Heart right ventricle (tissue), 16 donors: ENCODE measurements at regions of chr13 and their contacts with region 1.

Region 1: DNA sequence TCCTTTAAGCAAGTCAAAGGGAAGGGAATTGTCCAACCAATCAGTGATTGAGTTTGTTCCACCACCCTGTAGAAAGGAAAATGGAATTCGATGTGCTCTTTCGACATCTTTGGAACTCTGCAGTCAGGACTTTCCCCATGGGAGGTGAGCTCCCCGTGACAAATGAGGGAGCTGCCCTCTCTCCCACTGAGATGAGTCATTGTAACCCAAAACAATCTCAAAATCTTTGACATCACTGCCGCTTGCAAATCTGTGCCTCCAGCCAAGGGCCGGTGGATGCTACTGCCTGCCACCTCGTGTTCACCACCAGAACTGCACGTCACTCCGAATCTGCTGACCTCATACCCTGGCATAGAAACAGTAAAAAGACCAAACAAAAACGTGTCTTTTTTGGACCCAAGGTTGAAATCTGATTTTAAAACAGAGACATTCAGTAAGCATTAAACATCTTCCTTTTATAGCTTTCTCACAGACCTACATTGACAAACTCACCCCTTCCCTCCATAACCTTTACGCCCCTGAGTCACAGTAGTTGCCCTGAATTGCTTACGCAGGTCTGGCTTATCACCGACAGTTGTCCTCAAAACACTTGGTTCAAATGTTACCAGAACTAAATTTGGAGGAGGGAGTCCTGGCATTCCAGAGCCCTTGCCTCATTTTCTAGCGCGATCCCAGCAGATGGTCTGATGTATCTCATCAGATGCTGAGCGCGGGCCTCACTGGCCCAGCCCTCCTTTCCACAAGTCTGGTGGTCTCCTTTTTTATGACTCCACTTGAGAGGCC is 105.2 kb downstream of the COL4A2 start:
- DNase-seq: peak; percentile 84 to 93
- ATAC-seq: peak; percentile 81 to 89 (median 84)
- H3K4me3 ChIP-seq: peak overlapping the region in 1 of 10 donors; percentile 1
- H3K27ac ChIP-seq: peak overlapping the region; percentile 54 to 93 (median 85)
- H3K4me1 ChIP-seq: peaks cover 56 to 97% (median 86%) of the 10 kb centered on the region in 9 donors
- H3K27me3 ChIP-seq: no peaks in the 10 kb centered on the region
- CTCF ChIP-seq: peak; percentile 88 to 98 (median 93)

Region 2: GRCh38 chr13:110225609-110226562 is 186.4 kb before region 1 on chr13:
- intact Hi-C with region 1: loop called in 9 of 10 experiments (anchors 1 to 10 kb)
- DNase-seq: no peak
- ATAC-seq: no peak
- H3K4me3 ChIP-seq: no peak overlapping the region
- H3K27ac ChIP-seq: peak overlapping the region in 9 of 10 donors; percentile 15 to 76 (median 52)
- H3K4me1 ChIP-seq: peaks cover 5 to 90% (median 63%) of the 10 kb centered on the region in 9 donors
- H3K27me3 ChIP-seq: no peaks in the 10 kb centered on the region
- CTCF ChIP-seq: no peak

Region 3: GRCh38 chr13:110306960-110307746 is 105.2 kb before region 1 on chr13 and contains the starts of genes COL4A1 and COL4A2:
- intact Hi-C with region 1: loop called in 9 of 10 experiments (anchors 1 to 10 kb)
- DNase-seq: peak; percentile 81 to 86
- ATAC-seq: peak; percentile 69 to 88 (median 82)
- H3K4me3 ChIP-seq: peak within 1 kb of the TSS; percentile 81 to 98 (median 96)
- H3K27ac ChIP-seq: peak within 1 kb of the TSS; percentile 95 to 99 (median 97)
- H3K4me1 ChIP-seq: peaks cover 30 to 75% (median 66%) of the 10 kb centered on the region in 9 donors
- H3K27me3 ChIP-seq: peaks cover 0 to 85% (median 0%) of the 10 kb centered on the region in 7 donors
- CTCF ChIP-seq: peak in 2 of 9 donors; percentile 5 to 7
- total RNA-seq, gene COL4A1: 96.3 to 342 (median 147) TPM
- total RNA-seq, gene COL4A2: 81.7 to 301 (median 128) TPM

Region 4: DNA sequence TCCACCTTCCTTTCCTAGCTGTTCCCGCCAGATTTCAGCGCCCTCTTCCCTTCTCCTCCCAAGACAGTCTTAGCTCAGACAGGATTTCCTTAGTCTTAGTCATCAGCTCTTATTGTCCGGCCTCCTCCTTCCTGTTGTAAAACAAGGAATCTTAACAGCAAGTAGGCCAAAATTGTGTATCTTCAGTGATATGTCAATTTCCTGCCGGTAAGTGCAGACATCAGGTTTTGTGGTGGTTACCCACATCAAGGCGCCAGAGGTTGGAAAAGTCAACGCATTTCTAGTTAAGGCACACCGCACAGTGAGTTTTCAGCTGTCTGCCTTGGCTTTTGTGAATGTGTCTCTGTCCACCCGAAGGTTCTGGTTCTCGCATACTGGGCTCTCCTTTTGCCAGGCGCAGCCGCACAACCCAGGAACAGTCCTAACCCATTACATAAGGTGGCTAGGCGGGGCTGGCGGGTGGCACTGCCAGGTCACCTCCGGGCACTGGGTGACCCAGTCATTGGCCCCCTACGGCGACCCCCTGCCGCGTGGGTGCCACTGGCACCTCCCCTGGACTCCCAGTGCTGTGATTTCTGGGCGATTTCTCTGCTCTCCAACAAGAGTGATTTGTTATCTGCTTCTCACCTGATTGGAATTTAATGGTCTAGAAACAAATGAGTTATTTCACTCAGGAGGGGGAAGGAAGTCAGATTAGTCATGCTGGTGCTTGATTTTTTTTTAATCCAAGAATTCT is 92.4 kb before region 1 on chr13:
- intact Hi-C with region 1: loop called in 1 of 10 experiments (anchors 10 kb)
- DNase-seq: no peak
- ATAC-seq: peak in 7 of 8 donors; percentile 18 to 68 (median 34)
- H3K4me3 ChIP-seq: peak overlapping the region in 3 of 10 donors; percentile 3 to 23 (median 8)
- H3K27ac ChIP-seq: peak overlapping the region; percentile 28 to 91 (median 76)
- H3K4me1 ChIP-seq: peaks cover 32 to 100% (median 96%) of the 10 kb centered on the region in 9 donors
- H3K27me3 ChIP-seq: no peaks in the 10 kb centered on the region
- CTCF ChIP-seq: no peak

Region 5: DNA sequence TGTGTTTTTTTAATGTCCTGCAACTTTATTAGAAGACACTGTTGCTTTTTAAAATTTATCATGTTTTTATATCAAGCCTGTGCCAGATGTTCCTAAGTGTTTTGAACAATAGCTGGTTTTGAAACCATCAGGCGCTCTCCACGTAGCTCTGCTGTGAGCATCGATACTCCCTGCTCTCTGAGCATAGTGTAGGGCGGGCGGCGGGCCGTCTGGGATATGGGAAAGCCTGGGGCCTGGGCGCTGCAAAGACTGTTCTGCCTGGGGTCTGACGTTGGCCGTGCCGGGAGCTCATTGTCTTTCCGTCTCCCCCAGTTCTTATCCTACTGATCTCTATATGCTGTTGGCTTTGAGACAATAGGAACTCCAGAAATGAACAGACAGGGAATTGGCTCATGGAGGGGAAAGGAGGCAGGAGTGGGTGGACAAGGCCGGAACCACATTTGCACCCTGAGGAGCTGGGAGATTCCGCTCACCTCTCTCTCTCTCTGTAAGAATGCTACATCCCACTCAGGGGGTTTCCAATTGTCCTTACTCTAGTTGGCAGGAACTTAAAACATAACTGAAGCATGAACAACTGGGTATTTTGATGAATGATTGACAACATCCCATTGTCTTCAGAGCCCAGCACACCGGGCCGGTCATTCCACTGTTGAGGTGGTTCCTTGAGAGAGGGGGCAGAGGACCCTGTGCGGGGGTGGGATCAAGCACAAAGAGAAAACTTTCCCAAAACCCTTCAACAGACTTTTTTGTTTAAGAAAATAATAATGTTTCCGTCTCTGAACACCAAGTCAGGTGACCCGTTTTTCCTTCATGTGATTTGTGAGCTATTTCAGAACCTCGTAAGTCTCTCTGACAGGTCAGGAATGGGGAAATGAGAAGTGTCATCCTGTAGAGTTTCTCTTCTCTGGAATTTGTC is 40.5 kb before region 1 on chr13:
- intact Hi-C with region 1: loop called in 3 of 10 experiments (anchors 5 kb)
- DNase-seq: no peak
- ATAC-seq: peak; percentile 28 to 76 (median 60)
- H3K4me3 ChIP-seq: peak overlapping the region in 3 of 10 donors; percentile 0 to 16 (median 3)
- H3K27ac ChIP-seq: peak overlapping the region in 9 of 10 donors; percentile 38 to 77 (median 51)
- H3K4me1 ChIP-seq: peaks cover 21 to 81% (median 62%) of the 10 kb centered on the region in 9 donors
- H3K27me3 ChIP-seq: no peaks in the 10 kb centered on the region
- CTCF ChIP-seq: no peak

Region 6: GRCh38 chr13:110538632-110539031 is 126.3 kb after region 1 on chr13:
- intact Hi-C with region 1: no loop called
- DNase-seq: peak; percentile 63 to 87
- ATAC-seq: peak; percentile 61 to 83 (median 74)
- H3K4me3 ChIP-seq: no peak overlapping the region
- H3K27ac ChIP-seq: peak overlapping the region in 8 of 10 donors; percentile 7 to 83 (median 37)
- H3K4me1 ChIP-seq: peaks cover 5 to 80% (median 42%) of the 10 kb centered on the region in 9 donors
- H3K27me3 ChIP-seq: no peaks in the 10 kb centered on the region
- CTCF ChIP-seq: no peak